HCT116 (cell line): ENCODE measurements at regions of chr4 and their contacts with region 1.

Region 1: GRCh38 chr4:73019462-73020047 is 50.0 kb downstream of the COX18 start:
- DNase-seq: peak; percentile 23
- ATAC-seq: peak; percentile 42; the same call in 1 of the 2 replicates
- H3K4me3 ChIP-seq: no peak overlapping the region
- H3K27ac ChIP-seq: no peak overlapping the region
- H3K4me1 ChIP-seq: no peaks in the 10 kb centered on the region
- H3K27me3 ChIP-seq: peaks cover 6% of the 10 kb centered on the region; the same call in 1 of the 2 replicates
- CTCF ChIP-seq: peak; percentile 51 to 77 (median 54); a peak in 5 of 6 replicates
- POLR2A ChIP-seq: no peak
- RAD21 ChIP-seq: peak; percentile 71

Region 2: GRCh38 chr4:71732706-71733105 is 1286.8 kb before region 1 on chr4:
- CTCF ChIA-PET with region 1: no interaction called
- POLR2A ChIA-PET with region 1: no interaction called
- RAD21 ChIA-PET with region 1: no interaction called
- intact Hi-C with region 1: loop called (anchors 5 kb)
- DNase-seq: no peak
- ATAC-seq: no peak
- H3K4me3 ChIP-seq: no peak overlapping the region
- H3K27ac ChIP-seq: no peak overlapping the region
- H3K4me1 ChIP-seq: no peaks in the 10 kb centered on the region
- H3K27me3 ChIP-seq: no peaks in the 10 kb centered on the region
- CTCF ChIP-seq: peak; percentile 8 to 45 (median 18); a peak in 3 of 6 replicates
- POLR2A ChIP-seq: no peak
- RAD21 ChIP-seq: peak; percentile 41

Region 3: GRCh38 chr4:72295966-72296557 is 723.5 kb before region 1 on chr4:
- CTCF ChIA-PET with region 1: no interaction called
- POLR2A ChIA-PET with region 1: no interaction called
- RAD21 ChIA-PET with region 1: no interaction called
- intact Hi-C with region 1: loop called (anchors 10 kb)
- DNase-seq: peak; percentile 15
- ATAC-seq: peak; percentile 82
- H3K4me3 ChIP-seq: no peak overlapping the region
- H3K27ac ChIP-seq: no peak overlapping the region
- H3K4me1 ChIP-seq: no peaks in the 10 kb centered on the region
- H3K27me3 ChIP-seq: no peaks in the 10 kb centered on the region
- CTCF ChIP-seq: peak in 2 of 3 experiments; percentile 40 to 61; a peak in 4 of 6 replicates
- POLR2A ChIP-seq: no peak
- RAD21 ChIP-seq: peak; percentile 47

Region 4: DNA sequence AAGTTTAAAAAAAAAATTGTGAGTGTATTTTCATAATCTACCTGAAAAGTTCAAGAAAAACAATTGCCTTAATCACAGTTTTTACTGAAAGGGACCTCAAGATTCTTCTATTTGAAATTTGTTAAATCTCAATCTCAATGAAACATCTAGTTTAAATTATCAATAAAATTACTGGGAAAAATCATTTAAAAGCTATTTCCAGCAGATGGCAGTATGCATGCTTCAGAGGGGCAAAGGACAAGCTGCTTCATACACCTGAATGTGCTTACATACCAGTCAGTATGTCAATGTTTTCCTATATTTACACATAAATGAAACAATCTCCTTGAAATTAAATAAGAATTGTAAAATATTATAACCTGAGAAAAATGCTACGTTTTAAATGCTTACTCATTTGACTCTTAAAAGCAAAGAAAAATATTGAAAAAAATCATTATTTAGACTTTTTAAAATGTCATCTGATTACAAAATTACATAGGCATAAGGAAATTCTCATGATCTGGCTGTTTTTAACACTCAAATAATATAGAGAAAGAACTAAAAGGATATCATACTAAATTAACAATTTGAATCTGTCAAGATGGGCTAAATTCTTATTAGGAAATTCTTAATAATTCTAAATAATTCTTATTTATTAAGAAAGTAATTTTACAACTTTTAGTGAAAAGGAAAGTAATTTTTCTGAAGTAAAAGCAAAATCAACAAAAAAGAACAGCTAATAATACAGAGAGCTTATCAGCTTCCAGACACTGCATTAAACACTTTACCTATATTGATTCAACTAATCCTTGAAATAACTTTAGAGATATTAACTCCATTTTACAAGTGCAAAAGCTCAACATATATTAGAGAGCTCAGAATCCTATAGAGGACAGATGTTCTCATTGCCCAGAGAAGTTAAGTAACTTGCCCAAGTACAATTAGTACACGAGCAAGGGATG is 692.6 kb before region 1 on chr4:
- CTCF ChIA-PET with region 1: interaction called, 6 read pairs
- POLR2A ChIA-PET with region 1: no interaction called
- RAD21 ChIA-PET with region 1: no interaction called
- intact Hi-C with region 1: loop called (anchors 1 kb)
- DNase-seq: peak; percentile 8
- ATAC-seq: no peak
- H3K4me3 ChIP-seq: no peak overlapping the region
- H3K27ac ChIP-seq: no peak overlapping the region
- H3K4me1 ChIP-seq: no peaks in the 10 kb centered on the region
- H3K27me3 ChIP-seq: no peaks in the 10 kb centered on the region
- CTCF ChIP-seq: peak; percentile 33 to 53 (median 48); a peak in 4 of 6 replicates
- POLR2A ChIP-seq: no peak
- RAD21 ChIP-seq: peak; percentile 38; the same call in 1 of the 2 replicates

Region 5: GRCh38 chr4:72505314-72505744 is 514.2 kb before region 1 on chr4:
- CTCF ChIA-PET with region 1: no interaction called
- POLR2A ChIA-PET with region 1: no interaction called
- RAD21 ChIA-PET with region 1: no interaction called
- intact Hi-C with region 1: loop called (anchors 2 kb)
- DNase-seq: peak; percentile 0
- ATAC-seq: peak; percentile 53
- H3K4me3 ChIP-seq: no peak overlapping the region
- H3K27ac ChIP-seq: no peak overlapping the region
- H3K4me1 ChIP-seq: no peaks in the 10 kb centered on the region
- H3K27me3 ChIP-seq: no peaks in the 10 kb centered on the region
- CTCF ChIP-seq: peak; percentile 14 to 61 (median 44); a peak in 4 of 6 replicates
- POLR2A ChIP-seq: no peak
- RAD21 ChIP-seq: peak; percentile 40

Region 6: GRCh38 chr4:72701987-72702819 is 317.4 kb before region 1 on chr4:
- CTCF ChIA-PET with region 1: no interaction called
- POLR2A ChIA-PET with region 1: no interaction called
- RAD21 ChIA-PET with region 1: no interaction called
- intact Hi-C with region 1: loop called (anchors 1 kb)
- DNase-seq: peak; percentile 19
- ATAC-seq: no peak
- H3K4me3 ChIP-seq: peak overlapping the region; percentile 2 to 4; a peak in 1 of 4 replicates
- H3K27ac ChIP-seq: no peak overlapping the region
- H3K4me1 ChIP-seq: no peaks in the 10 kb centered on the region
- H3K27me3 ChIP-seq: no peaks in the 10 kb centered on the region
- CTCF ChIP-seq: peak; percentile 27 to 62 (median 42); a peak in 4 of 6 replicates
- POLR2A ChIP-seq: no peak
- RAD21 ChIP-seq: peak; percentile 50